Psoas muscle (tissue), 8 donors: ENCODE measurements at regions of chr9 and their contacts with region 1.

Region 1: GRCh38 chr9:4805191-4805918 is 12.6 kb downstream of the RCL1 start:
- DNase-seq: peak; percentile 62 to 86
- ATAC-seq: peak; percentile 75 to 93 (median 88)
- H3K4me3 ChIP-seq: peak overlapping the region; percentile 53
- H3K27ac ChIP-seq: peak overlapping the region; percentile 88
- H3K4me1 ChIP-seq: peaks cover 31% of the 10 kb centered on the region
- H3K27me3 ChIP-seq: no peaks in the 10 kb centered on the region
- CTCF ChIP-seq: no peak

Region 2: GRCh38 chr9:3516667-3517330 is 1288.6 kb before region 1 on chr9:
- intact Hi-C with region 1: loop called in 1 of 2 experiments (anchors 10 kb)
- DNase-seq: peak in 1 of 2 donors; percentile 65
- ATAC-seq: peak; percentile 84 to 87 (median 84)
- H3K4me3 ChIP-seq: peak overlapping the region; percentile 50
- H3K27ac ChIP-seq: peak overlapping the region; percentile 92
- H3K4me1 ChIP-seq: peaks cover 33% of the 10 kb centered on the region
- H3K27me3 ChIP-seq: no peaks in the 10 kb centered on the region
- CTCF ChIP-seq: no peak